Sigmoid colon (tissue), 7 donors: ENCODE measurements at regions of chr3 and their contacts with region 1.

Region 1: GRCh38 chr3:197256836-197257444 is 41.5 kb downstream of the DLG1 start:
- DNase-seq: no peak
- H3K4me3 ChIP-seq: no peak overlapping the region
- H3K27ac ChIP-seq: peak overlapping the region in 1 of 4 donors; percentile 3
- H3K4me1 ChIP-seq: peaks cover 0 to 10% (median 3%) of the 10 kb centered on the region in 4 donors
- H3K27me3 ChIP-seq: no peaks in the 10 kb centered on the region
- CTCF ChIP-seq: peak in 3 of 4 experiments; percentile 41 to 61 (median 50)
- EP300 ChIP-seq: no peak
- POLR2A ChIP-seq: no peak

Region 2: DNA sequence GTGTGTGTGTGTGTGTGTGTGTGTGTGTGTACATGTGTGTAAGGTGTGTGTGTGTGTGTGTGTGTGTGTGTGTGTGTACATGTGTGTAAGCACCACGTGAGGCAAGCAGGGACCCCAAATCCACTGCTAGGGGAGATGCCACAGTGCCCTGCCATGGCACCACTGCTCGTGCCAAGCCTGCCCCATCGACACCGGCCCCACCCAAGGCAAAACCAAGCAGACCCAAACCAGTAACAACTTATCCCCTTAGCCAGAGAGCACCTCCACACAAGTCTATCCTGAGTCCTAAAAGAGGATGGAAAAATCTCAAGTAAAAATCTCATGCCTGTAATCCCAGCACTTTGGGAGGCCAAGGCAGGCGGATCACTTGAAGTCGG is 253.7 kb after region 1 on chr3:
- intact Hi-C with region 1: loop called (anchors 1 kb)
- DNase-seq: no peak
- H3K4me3 ChIP-seq: no peak overlapping the region
- H3K27ac ChIP-seq: no peak overlapping the region
- H3K4me1 ChIP-seq: peaks cover 0 to 11% (median 5%) of the 10 kb centered on the region in 4 donors
- H3K27me3 ChIP-seq: no peaks in the 10 kb centered on the region
- CTCF ChIP-seq: no peak
- EP300 ChIP-seq: no peak
- POLR2A ChIP-seq: no peak